ENCODE measurements at regions of chr4 and their contacts with region 1.

Region 1: DNA sequence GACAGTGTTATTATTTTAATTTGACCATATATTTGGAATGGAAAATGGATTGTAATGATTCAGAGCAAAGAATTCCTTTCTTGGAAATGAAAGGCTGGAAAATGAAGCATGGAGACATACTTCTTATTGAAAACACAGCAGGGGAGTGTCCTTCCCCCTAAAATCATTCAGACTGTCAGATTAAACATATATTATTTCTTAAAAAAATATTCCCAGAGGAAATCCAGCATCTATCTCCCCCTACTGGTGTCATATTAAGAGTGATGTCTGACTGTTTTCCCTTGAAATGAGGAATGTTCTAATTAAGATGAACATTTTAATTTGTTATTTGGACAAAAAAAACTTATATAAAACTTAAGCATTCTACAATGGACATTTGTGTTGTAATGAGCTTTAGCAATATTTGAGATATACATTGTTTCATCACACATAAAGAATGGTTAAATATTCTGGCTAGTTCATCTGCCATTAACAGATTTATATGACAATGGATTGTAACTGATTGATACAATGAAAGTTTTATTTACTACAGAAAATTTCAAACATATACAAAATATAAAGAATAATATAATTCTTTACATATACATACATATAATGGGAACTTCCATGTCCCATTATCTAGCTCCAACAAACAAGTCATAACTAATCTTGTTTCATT is 264.6 kb downstream of the SPRY1 start:
- DNase-seq: no peak
- H3K4me3 ChIP-seq: no peak overlapping the region
- H3K27ac ChIP-seq: no peak overlapping the region
- H3K4me1 ChIP-seq: no peaks in the 10 kb centered on the region
- H3K27me3 ChIP-seq: no peaks in the 10 kb centered on the region
- CTCF ChIP-seq: peak in 5 of 7 experiments; percentile 12 to 58 (median 45)
- EP300 ChIP-seq: no peak
- POLR2A ChIP-seq: no peak

Region 2: DNA sequence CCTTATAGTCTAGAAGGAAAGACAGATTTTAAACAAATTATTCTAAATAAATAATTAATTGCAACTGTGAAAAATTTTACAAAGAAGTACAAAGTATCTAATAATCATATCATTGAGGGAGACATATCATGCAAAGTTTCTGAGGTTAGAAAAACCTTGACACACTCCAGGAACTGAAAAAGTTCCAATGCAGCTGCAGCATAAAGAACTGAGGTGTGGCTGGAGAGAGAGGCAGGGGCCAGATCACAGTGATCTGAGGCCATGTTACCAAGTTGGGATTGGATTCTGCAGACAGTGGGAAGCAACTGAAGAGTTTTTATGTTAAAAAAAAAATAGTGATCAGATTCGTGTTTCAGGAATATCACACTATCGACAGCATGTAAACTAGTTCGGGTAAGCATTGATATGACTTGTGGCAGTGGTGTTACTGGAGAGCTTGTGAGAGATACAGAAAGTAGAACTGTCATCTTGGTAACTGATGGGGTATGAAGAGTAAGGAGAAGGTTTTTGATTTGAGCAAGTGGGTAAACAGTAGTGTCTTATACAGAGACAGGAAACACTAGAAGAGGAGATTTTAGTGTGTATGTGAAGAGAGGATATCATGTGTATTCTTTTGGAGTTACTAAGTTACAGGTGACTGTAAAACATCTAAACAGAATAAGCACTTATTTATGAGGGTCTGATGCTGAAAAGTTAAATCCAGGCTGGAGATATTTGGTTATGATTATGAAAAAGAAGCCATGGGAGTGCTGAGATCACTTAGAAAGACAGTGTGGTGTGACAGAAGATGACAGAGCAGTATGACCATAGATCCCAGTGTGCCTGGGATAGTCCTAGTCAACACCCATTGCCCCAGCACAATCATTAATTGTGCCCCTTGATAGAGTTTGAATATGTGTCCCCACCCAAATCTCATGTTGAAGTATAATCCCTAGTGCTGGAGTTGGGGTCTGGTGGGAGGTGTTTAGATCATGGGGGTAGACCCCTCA is 280.2 kb before region 1 on chr4:
- intact Hi-C with region 1: loop called (anchors 10 kb)
- DNase-seq: no peak
- H3K4me3 ChIP-seq: no peak overlapping the region
- H3K27ac ChIP-seq: no peak overlapping the region
- H3K4me1 ChIP-seq: peaks cover 0 to 4% (median 0%) of the 10 kb centered on the region in 4 donors
- H3K27me3 ChIP-seq: no peaks in the 10 kb centered on the region
- CTCF ChIP-seq: no peak
- EP300 ChIP-seq: no peak
- POLR2A ChIP-seq: no peak

Measured in stomach (tissue), 19 donors.